Dorsolateral prefrontal cortex (tissue), 120 donors: ENCODE measurements at regions of chr18 and their contacts with region 1.

Region 1: DNA sequence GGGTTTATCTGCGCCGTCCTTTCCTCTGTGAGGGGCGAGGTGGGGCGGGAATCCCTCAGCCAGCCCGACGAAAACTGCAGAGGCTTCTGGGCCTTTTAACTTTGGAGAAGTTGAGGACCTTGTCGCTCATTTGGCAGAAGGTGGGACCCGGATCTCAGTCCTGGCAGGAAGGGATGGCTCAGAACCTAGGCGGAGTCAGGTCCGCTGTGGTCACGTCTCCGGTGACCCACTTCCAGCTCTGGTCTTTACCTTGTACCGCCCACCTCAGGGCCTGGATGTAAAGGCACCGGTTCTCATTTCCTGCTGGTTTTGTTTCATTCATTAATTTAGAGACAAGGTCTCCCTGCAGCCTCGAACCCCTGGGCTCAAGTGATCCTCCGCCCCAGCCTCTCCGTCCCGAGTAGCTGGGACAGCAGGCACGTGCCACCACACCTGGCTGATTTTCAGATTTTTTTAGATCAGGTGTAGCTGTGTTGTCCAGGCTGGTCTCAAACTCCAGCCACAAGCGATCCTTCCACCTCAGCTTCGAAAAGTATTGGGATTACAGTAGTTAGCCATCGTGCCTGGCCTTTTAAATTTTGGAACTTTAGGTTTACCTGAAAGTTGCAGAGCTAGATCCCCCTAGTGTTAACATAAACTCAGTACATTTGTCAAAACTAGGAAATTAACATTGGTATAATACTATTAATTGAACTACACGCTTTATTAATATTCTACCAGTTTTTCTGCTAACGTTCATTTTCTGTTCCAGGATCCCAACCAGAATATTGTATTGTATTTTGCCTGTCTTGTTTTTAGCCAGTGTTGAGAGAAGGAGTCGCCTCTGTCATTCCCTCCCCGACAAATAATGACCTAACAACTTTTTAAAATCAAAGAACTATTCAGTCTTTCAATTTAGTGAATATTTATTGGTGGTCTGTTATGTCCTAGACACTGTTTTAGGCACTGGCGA is 852 bp downstream of the POLI start:
- DNase-seq: peak in 5 of 10 donors; percentile 23 to 52 (median 39)
- H3K4me3 ChIP-seq: peak overlapping the region; percentile 50 to 99 (median 88)
- H3K27ac ChIP-seq: peak overlapping the region in 58 of 59 donors; percentile 26 to 96 (median 85)
- H3K27me3 ChIP-seq: no peaks in the 10 kb centered on the region
- CTCF ChIP-seq: peak in 46 of 56 donors; percentile 7 to 52 (median 37)

Region 2: GRCh38 chr18:54224379-54225014 is 45.7 kb before region 1 on chr18 and contains the start of gene MBD2:
- intact Hi-C with region 1: loop called (anchors 1 to 2 kb)
- DNase-seq: peak; percentile 87 to 96 (median 93)
- H3K4me3 ChIP-seq: peak within 1 kb of the TSS; percentile 49 to 81 (median 72)
- H3K27ac ChIP-seq: peak within 1 kb of the TSS in 54 of 59 donors; percentile 3 to 82 (median 69)
- H3K27me3 ChIP-seq: no peaks in the 10 kb centered on the region
- CTCF ChIP-seq: peak in 50 of 56 donors; percentile 11 to 64 (median 46)
- total RNA-seq, gene MBD2: 22.9 to 55.8 (median 36.4) TPM